WTC11 (cell line): ENCODE measurements at regions of chr5 and their contacts with region 1.

Region 1: GRCh38 chr5:77343165-77343564 is 132.7 kb downstream of the PDE8B start:
- DNase-seq: no peak
- ATAC-seq: no peak
- H3K4me3 Mint-ChIP-seq: no peak overlapping the region
- H3K27ac Mint-ChIP-seq: no peak overlapping the region
- H3K4me1 Mint-ChIP-seq: no peaks in the 10 kb centered on the region
- H3K27me3 Mint-ChIP-seq: no peaks in the 10 kb centered on the region
- CTCF ChIP-seq: no peak

Region 2: DNA sequence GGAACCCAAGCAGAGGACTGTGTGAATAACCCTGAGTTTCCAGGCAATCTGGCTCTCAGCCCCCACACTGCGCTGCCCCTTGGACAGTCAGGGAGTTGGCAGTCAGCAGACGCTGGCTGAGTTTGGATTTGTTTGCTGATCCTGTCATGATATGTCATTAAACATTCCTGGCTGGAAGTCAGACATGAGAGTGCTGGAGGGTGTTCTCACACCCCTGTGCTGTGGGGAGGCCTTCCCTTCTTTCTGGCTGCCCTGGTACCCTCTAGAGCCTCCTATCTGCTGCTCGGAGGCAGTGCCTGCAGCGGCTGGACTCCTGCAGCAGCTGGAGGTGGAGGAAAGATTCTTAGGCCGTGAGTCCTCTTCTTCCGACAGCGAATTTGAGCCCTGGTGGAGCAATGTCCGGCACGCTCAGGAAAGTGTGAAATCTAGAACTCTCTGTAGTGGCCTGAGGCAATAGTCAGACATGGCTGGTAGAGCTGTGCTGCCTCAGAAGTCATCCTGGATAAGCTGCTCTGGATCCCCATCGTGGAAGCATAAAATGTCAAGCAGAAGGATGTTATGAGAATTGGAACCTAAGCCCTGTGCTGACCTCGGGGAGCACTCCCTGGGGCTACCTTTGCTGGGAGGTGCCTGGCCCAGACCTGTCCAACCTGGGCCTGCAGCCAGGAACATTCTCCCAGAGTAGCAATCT is 60.7 kb before region 1 on chr5:
- CTCF ChIA-PET with region 1: no interaction called
- POLR2A ChIA-PET with region 1: interaction called, 12 read pairs
- DNase-seq: peak; percentile 23
- ATAC-seq: peak; percentile 87
- H3K4me3 Mint-ChIP-seq: no peak overlapping the region
- H3K27ac Mint-ChIP-seq: no peak overlapping the region
- H3K4me1 Mint-ChIP-seq: peaks cover 7% of the 10 kb centered on the region
- H3K27me3 Mint-ChIP-seq: no peaks in the 10 kb centered on the region; the same call in 1 of the 2 replicates
- CTCF ChIP-seq: no peak